ENCODE measurements at regions of chr2 and their contacts with region 1.

Region 1: GRCh38 chr2:217988014-217988839 is 14.6 kb downstream of the TNS1 start:
- DNase-seq: peak; percentile 87 to 92
- H3K4me3 ChIP-seq: peak overlapping the region; percentile 11 to 18
- H3K27ac ChIP-seq: peak overlapping the region; percentile 16 to 63
- H3K4me1 ChIP-seq: peaks cover 0 to 22% (median 17%) of the 10 kb centered on the region in 4 donors
- H3K27me3 ChIP-seq: no peaks in the 10 kb centered on the region
- CTCF ChIP-seq: peak; percentile 92 to 97

Region 2: DNA sequence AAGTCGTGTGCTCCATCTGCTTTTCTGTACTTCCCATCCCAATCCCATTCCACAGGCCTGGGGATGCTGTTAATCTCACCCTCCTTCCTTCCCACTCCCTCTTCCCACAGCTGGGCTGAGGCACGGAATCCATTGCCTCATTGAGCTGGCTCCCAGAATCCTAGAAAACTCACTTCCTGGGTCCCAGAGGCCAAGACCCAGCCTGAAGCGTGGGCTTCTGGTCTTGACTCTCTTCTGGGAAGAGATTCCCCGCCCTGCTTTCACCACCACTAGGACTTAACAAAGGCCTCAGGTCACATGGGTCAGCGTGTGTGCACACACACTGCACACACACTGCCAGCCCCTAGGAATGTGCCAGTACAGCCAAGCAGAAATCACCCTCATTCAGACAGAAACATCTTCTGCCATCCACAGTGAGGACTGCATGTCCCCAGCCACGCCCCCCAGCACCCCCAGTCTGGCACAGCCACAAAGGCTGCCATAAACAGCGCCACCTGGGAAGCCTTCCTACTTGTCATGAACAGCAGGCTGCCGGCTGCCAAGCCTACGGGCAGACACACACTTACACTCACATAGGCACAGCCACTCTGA is 151.2 kb before region 1 on chr2:
- intact Hi-C with region 1: no loop called
- DNase-seq: peak; percentile 88
- H3K4me3 ChIP-seq: no peak overlapping the region
- H3K27ac ChIP-seq: peak overlapping the region; percentile 71 to 78
- H3K4me1 ChIP-seq: peaks cover 0 to 100% (median 81%) of the 10 kb centered on the region in 4 donors
- H3K27me3 ChIP-seq: no peaks in the 10 kb centered on the region
- CTCF ChIP-seq: no peak

Region 3: GRCh38 chr2:217943446-217944389 is 44.5 kb before region 1 on chr2:
- intact Hi-C with region 1: loop called (anchors 2 kb)
- DNase-seq: peak; percentile 82 to 95
- H3K4me3 ChIP-seq: peak overlapping the region; percentile 83 to 89
- H3K27ac ChIP-seq: peak overlapping the region; percentile 95 to 98
- H3K4me1 ChIP-seq: peaks cover 0 to 57% (median 47%) of the 10 kb centered on the region in 4 donors
- H3K27me3 ChIP-seq: no peaks in the 10 kb centered on the region
- CTCF ChIP-seq: peak; percentile 13 to 27